A673 (cell line): ENCODE measurements at regions of chr11 and their contacts with region 1.

Region 1: GRCh38 chr11:40129266-40129665 is 1330.2 kb downstream of the LRRC4C start:
- DNase-seq: peak; percentile 90
- H3K4me3 ChIP-seq: no peak overlapping the region
- H3K27ac ChIP-seq: peak overlapping the region; percentile 31
- H3K4me1 ChIP-seq: peaks cover 69% of the 10 kb centered on the region
- H3K27me3 ChIP-seq: no peaks in the 10 kb centered on the region
- CTCF ChIP-seq: peak; percentile 93

Region 2: GRCh38 chr11:38791302-38791961 is 1337.8 kb before region 1 on chr11:
- CTCF ChIA-PET with region 1: interaction called, 3 read pairs
- POLR2A ChIA-PET with region 1: no interaction called
- intact Hi-C with region 1: loop called (anchors 10 kb)
- DNase-seq: peak; percentile 96
- H3K4me3 ChIP-seq: no peak overlapping the region
- H3K27ac ChIP-seq: no peak overlapping the region
- H3K4me1 ChIP-seq: peaks cover 10% of the 10 kb centered on the region
- H3K27me3 ChIP-seq: no peaks in the 10 kb centered on the region
- CTCF ChIP-seq: peak; percentile 100

Region 3: DNA sequence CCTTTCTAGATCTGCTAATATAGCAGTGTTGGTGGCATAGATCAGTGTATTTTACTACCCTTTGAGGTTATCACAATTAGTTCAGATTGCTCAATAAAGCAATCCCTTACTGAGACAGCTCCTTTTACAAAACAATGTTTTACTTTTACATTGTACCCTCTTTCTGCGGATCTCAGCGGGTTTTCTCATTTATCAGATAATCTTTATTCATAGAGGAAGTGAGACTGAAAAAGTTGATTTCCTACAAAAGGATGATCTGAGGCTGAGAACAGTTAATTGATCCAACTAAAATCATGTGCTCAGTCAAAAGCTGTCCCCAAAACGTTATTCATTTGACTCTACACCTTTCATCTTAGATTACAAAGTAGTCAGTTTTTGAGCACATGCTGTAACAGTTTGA is 989.7 kb before region 1 on chr11:
- CTCF ChIA-PET with region 1: interaction called, 5 read pairs
- POLR2A ChIA-PET with region 1: no interaction called
- intact Hi-C with region 1: loop called (anchors 10 kb)
- DNase-seq: peak; percentile 99
- H3K4me3 ChIP-seq: no peak overlapping the region
- H3K27ac ChIP-seq: peak overlapping the region; percentile 61
- H3K4me1 ChIP-seq: peaks cover 36% of the 10 kb centered on the region
- H3K27me3 ChIP-seq: no peaks in the 10 kb centered on the region
- CTCF ChIP-seq: no peak

Region 4: DNA sequence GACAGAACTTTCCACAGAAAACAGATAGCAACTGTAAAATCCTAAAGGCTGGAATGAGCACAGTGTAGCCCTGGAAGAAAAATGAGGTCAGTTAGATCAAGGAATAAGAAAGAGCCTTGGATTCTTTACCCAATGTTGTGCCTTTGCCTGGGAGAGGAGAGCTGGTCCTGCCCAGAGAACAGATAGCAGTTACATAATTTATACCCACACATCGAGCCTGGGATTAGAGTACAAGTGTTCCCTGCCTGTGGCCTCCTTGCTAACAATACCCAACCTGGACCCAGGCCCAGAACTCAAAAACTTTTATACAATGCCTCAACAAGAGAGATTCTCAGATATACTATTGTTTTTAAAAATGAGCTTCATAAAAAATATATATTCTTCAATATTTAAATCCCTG is 668.2 kb before region 1 on chr11:
- CTCF ChIA-PET with region 1: interaction called, 3 read pairs
- POLR2A ChIA-PET with region 1: no interaction called
- intact Hi-C with region 1: loop called (anchors 1 kb)
- DNase-seq: peak; percentile 69
- H3K4me3 ChIP-seq: no peak overlapping the region
- H3K27ac ChIP-seq: peak overlapping the region; percentile 99
- H3K4me1 ChIP-seq: peaks cover 54% of the 10 kb centered on the region
- H3K27me3 ChIP-seq: no peaks in the 10 kb centered on the region
- CTCF ChIP-seq: no peak

Region 5: GRCh38 chr11:39975091-39975490 is 154.2 kb before region 1 on chr11:
- CTCF ChIA-PET with region 1: no interaction called
- POLR2A ChIA-PET with region 1: no interaction called
- intact Hi-C with region 1: loop called (anchors 5 kb)
- DNase-seq: peak; percentile 92
- H3K4me3 ChIP-seq: no peak overlapping the region
- H3K27ac ChIP-seq: no peak overlapping the region
- H3K4me1 ChIP-seq: peaks cover 25% of the 10 kb centered on the region
- H3K27me3 ChIP-seq: peaks cover 7% of the 10 kb centered on the region
- CTCF ChIP-seq: no peak

Region 6: DNA sequence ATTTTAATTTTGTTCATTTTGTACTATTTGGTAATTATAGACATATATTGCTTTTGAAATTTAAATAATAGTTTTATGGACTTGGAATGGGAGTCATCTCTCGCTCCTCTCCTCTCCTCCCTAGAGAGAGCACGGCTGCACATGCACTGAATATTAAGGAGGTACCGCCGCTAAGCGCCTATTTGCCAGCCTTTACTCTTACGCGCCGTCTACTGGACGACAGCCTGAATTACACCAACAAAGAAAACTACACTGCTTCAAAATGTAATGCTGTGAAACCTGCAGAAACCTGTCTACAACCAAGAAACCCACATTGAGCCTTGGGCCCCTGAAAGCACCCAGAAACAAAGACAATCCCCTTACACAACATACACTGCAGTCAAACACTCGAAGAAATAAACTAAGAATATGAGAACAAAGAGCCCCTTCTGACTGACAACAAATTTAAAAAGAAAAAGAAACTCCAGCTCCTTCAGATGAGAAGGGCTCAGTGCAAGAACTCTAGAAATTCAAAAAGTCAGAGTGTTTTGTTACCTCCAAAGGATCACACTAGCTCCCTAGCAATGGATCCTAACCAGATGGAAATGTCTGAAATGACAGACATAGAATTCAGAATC is 593.0 kb after region 1 on chr11:
- CTCF ChIA-PET with region 1: no interaction called
- POLR2A ChIA-PET with region 1: no interaction called
- intact Hi-C with region 1: loop called (anchors 2 kb)
- DNase-seq: peak; percentile 89
- H3K4me3 ChIP-seq: no peak overlapping the region
- H3K27ac ChIP-seq: no peak overlapping the region
- H3K4me1 ChIP-seq: no peaks in the 10 kb centered on the region
- H3K27me3 ChIP-seq: no peaks in the 10 kb centered on the region
- CTCF ChIP-seq: peak; percentile 99

Region 7: GRCh38 chr11:41431784-41432183 is 1302.5 kb after region 1 on chr11:
- CTCF ChIA-PET with region 1: no interaction called
- POLR2A ChIA-PET with region 1: no interaction called
- intact Hi-C with region 1: loop called (anchors 5 kb)
- DNase-seq: peak; percentile 76
- H3K4me3 ChIP-seq: no peak overlapping the region
- H3K27ac ChIP-seq: no peak overlapping the region
- H3K4me1 ChIP-seq: peaks cover 13% of the 10 kb centered on the region
- H3K27me3 ChIP-seq: no peaks in the 10 kb centered on the region
- CTCF ChIP-seq: peak; percentile 94